ENCODE measurements at regions of chr4 and their contacts with region 1.

Region 1: DNA sequence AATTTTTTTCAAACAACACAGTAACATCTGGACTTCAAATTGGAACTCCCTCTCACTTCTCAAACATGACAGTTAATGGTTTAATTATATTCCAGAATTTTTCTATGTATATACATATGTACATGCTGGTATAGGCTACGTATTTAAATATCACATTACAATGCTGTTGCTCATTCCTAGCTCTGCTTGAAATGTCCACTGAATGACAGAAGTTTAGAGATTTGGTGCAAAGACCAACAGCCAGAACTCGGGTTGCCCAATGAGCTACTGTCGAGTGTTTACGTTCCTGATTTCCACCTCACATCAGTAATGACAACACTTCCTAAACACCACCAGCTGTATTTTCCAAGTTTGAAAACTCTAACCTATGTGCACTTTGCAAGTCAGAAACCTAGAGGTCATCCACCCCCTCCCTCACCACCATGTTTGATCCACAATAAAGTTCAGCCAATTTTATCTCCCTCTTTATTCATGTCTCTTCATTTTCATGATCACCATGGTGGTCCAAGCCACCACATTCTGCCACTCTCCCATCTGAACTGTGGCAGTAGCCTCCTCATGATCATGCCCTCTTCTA is 49.3 kb upstream of the RPL34 start:
- DNase-seq: no peak
- ATAC-seq: no peak
- H3K4me3 ChIP-seq: no peak overlapping the region
- H3K27ac ChIP-seq: no peak overlapping the region
- H3K4me1 ChIP-seq: no peaks in the 10 kb centered on the region
- H3K27me3 ChIP-seq: no peaks in the 10 kb centered on the region
- CTCF ChIP-seq: no peak
- POLR2A ChIP-seq: no peak

Region 2: DNA sequence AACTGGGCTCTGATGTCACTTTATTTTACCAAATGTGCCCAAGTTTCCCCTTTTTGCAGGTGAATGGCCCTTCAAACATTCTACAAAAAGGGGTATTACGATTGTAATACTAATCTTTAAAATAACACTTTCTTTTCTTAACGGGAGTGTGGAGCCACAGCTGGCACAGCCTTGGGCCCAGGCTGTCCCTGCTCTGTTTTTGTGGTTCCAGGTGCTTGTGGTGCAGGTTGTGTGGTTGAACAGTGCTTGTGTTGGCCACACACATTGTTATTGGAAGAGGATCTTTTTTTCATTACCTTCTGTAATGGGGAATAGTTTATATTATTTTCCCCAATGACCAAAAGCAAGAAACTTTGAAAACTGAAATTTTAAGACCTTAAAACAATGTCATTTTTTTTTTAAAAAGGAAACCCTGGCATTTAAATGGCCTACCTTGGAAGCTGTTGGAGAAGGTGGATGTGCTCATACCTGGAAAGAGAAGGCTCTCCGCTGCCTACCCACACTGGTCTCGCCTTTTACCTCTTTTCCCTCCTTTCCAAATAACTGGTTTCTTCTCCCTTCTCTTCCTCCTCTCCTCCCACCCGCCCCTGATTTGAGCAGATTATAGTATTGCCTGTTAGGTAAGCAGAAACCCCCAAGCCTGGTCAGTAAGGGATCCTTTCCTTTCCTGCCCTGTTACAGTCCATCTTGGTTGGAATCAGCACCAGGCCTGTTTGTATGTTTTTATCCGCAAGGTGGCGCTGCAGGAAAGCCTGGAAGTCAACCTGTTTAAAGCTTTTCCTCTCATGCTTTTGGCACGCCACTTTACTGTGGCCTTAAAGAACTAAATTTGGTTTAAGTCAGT is 552.8 kb before region 1 on chr4:
- intact Hi-C with region 1: loop called (anchors 5 kb)
- DNase-seq: peak; percentile 79 to 89 (median 86)
- ATAC-seq: peak; percentile 78
- H3K4me3 ChIP-seq: no peak overlapping the region
- H3K27ac ChIP-seq: no peak overlapping the region
- H3K4me1 ChIP-seq: no peaks in the 10 kb centered on the region
- H3K27me3 ChIP-seq: no peaks in the 10 kb centered on the region
- CTCF ChIP-seq: peak; percentile 64 to 87 (median 77)
- POLR2A ChIP-seq: no peak

Measured in body of pancreas (tissue), 4 donors.